T-cell (primary cell): ENCODE measurements at regions of chr2 and their contacts with region 1.

Region 1: GRCh38 chr2:157302492-157303099 is 23.0 kb downstream of the ERMN start:
- DNase-seq: peak in 23 of 35 experiments; percentile 1 to 74 (median 11)
- ATAC-seq: peak; percentile 68 to 80 (median 74)
- H3K4me3 ChIP-seq: no peak overlapping the region
- H3K4me3 Mint-ChIP-seq: no peak overlapping the region
- H3K27ac ChIP-seq: no peak overlapping the region
- H3K27ac Mint-ChIP-seq: no peak overlapping the region
- H3K4me1 ChIP-seq: peaks cover 0 to 7% of the 10 kb centered on the region in 2 experiments
- H3K4me1 Mint-ChIP-seq: peaks cover 11 to 18% (median 14%) of the 10 kb centered on the region in 3 donors
- H3K27me3 ChIP-seq: peaks cover 0 to 3% of the 10 kb centered on the region in 2 experiments
- H3K27me3 Mint-ChIP-seq: peaks cover 0 to 3% of the 10 kb centered on the region in 2 donors

Region 2: DNA sequence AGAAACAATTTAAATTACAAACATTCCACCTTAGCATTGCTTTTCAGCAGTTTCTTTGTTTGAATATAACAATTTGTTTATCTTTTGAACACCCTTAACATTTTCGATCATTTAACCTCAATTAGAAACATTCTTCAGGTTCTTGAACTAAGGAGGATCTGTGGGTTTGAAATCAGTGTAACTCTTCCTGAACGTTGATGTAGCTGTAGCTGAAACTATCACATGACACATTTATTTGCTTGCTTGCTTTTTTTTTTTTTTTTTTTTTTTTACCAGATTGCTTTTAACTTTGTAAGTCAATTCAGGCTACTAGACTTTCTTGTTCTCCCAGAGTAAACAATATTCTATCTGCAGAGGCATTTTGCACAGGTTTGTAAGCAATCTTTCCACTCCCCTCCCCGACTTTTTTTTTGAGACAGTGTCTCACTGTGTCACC is 818.8 kb before region 1 on chr2:
- CTCF ChIA-PET with region 1: interaction called in 1 of 2 experiments, 3 read pairs
- POLR2A ChIA-PET with region 1: interaction called in 1 of 2 experiments, 13 read pairs
- DNase-seq: no peak
- ATAC-seq: no peak
- H3K4me3 ChIP-seq: no peak overlapping the region
- H3K4me3 Mint-ChIP-seq: no peak overlapping the region
- H3K27ac ChIP-seq: no peak overlapping the region
- H3K27ac Mint-ChIP-seq: no peak overlapping the region
- H3K4me1 ChIP-seq: no peaks in the 10 kb centered on the region
- H3K4me1 Mint-ChIP-seq: peaks cover 7 to 36% (median 26%) of the 10 kb centered on the region in 3 donors
- H3K27me3 ChIP-seq: no peaks in the 10 kb centered on the region
- H3K27me3 Mint-ChIP-seq: no peaks in the 10 kb centered on the region

Region 3: DNA sequence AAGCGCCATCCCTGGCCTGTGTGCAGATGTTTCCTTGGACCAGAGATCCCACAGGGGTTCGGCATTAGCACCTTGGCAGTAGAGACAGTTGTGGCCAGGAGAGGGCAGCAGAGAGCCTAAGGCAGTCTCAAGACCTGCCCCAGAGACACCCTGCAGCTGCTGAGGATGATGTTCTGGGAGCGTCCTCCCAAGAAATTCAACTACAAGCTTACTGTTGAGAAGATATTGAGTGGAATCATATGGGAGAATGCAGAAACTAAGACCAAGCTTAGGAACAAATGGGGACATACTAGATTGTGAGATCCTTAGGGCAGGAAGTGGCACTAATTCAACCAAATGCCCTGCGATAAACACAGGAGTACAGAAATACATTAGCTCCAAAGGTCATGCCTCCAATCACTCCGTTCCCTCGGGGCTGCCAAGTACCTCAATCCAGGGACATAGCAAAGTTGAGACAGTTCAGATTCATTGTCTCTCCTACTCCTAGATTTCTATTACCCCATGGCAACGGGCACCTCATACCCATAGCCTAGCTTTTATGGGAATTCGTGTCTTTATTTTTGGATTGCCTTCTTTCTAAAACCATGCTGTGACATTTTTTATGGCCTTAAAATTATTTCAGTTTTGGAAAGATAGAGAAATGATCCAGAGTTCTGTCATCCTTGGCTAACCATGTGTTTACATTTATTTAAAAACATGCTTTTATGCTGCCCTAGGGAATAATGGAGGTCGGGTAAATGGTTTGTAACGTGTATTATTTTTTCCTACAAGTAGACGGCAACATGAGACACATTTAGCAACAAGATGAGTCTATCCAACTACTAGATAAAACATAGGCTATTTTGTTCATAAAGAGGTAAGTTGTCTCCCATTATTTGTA is 25.3 kb after region 1 on chr2:
- CTCF ChIA-PET with region 1: interaction called, 7 to 27 read pairs
- POLR2A ChIA-PET with region 1: no interaction called
- DNase-seq: peak; percentile 61 to 94 (median 81)
- ATAC-seq: peak; percentile 86 to 92 (median 91)
- H3K4me3 ChIP-seq: no peak overlapping the region
- H3K4me3 Mint-ChIP-seq: peak overlapping the region; percentile 40 to 55 (median 55)
- H3K27ac ChIP-seq: peak overlapping the region; percentile 44
- H3K27ac Mint-ChIP-seq: peak overlapping the region; percentile 87 to 91
- H3K4me1 ChIP-seq: peaks cover 33 to 39% of the 10 kb centered on the region in 2 experiments
- H3K4me1 Mint-ChIP-seq: peaks cover 54 to 56% (median 54%) of the 10 kb centered on the region in 3 donors
- H3K27me3 ChIP-seq: no peaks in the 10 kb centered on the region
- H3K27me3 Mint-ChIP-seq: no peaks in the 10 kb centered on the region

Region 4: DNA sequence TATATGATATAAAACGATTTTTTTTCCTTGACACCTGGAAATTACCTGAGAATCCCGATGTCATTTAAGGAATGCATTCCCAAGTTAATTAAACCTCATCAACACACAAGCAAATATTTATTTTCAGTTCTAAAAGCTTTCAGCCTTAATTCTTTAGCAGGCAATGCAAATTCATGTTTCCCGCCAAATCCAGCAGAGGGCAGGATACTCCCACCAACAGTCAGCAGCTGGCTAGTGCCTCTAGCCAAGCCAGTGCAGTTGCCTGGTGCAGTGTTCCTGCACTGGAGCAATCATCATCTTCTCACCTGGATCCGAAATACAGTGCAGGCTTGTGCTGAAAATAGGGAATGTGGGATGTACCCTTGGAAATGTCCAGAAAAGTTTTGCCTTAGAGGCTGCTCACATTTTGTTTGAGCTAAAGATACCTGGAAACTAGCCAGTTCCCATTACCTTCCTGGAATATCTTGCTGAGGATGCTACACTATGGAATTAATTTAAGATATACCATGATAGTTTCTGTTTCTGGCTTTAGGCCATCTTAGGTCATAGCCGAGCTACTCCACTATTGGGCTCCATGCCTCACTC is 189.7 kb after region 1 on chr2:
- CTCF ChIA-PET with region 1: interaction called, 9 to 16 read pairs
- POLR2A ChIA-PET with region 1: interaction called in 1 of 2 experiments, 3 read pairs
- DNase-seq: peak; percentile 45 to 83 (median 64)
- ATAC-seq: peak; percentile 86 to 91 (median 88)
- H3K4me3 ChIP-seq: no peak overlapping the region
- H3K4me3 Mint-ChIP-seq: no peak overlapping the region
- H3K27ac ChIP-seq: no peak overlapping the region
- H3K27ac Mint-ChIP-seq: peak overlapping the region in 1 of 2 donors; percentile 40
- H3K4me1 ChIP-seq: peaks cover 0 to 6% of the 10 kb centered on the region in 2 experiments
- H3K4me1 Mint-ChIP-seq: peaks cover 46 to 54% (median 49%) of the 10 kb centered on the region in 3 donors
- H3K27me3 ChIP-seq: no peaks in the 10 kb centered on the region
- H3K27me3 Mint-ChIP-seq: no peaks in the 10 kb centered on the region

Region 5: GRCh38 chr2:157628477-157629415 is 326.1 kb after region 1 on chr2 and contains the start of gene ACVR1C:
- CTCF ChIA-PET with region 1: interaction called, 4 to 17 read pairs
- POLR2A ChIA-PET with region 1: interaction called, 5 to 8 read pairs
- DNase-seq: peak; percentile 35 to 81 (median 59)
- ATAC-seq: peak; percentile 81 to 87 (median 87)
- H3K4me3 ChIP-seq: peak within 1 kb of the TSS; percentile 76 to 84
- H3K4me3 Mint-ChIP-seq: peak within 1 kb of the TSS; percentile 93 to 98 (median 94)
- H3K27ac ChIP-seq: peak within 1 kb of the TSS; percentile 50
- H3K27ac Mint-ChIP-seq: peak within 1 kb of the TSS; percentile 88 to 93
- H3K4me1 ChIP-seq: peaks cover 5 to 18% of the 10 kb centered on the region in 2 experiments
- H3K4me1 Mint-ChIP-seq: peaks cover 39 to 41% (median 40%) of the 10 kb centered on the region in 3 donors
- H3K27me3 ChIP-seq: peaks cover 0 to 10% of the 10 kb centered on the region in 2 experiments
- H3K27me3 Mint-ChIP-seq: no peaks in the 10 kb centered on the region
- total RNA-seq, gene ACVR1C: 3.6 to 5.7 (median 5.2) TPM

Region 6: DNA sequence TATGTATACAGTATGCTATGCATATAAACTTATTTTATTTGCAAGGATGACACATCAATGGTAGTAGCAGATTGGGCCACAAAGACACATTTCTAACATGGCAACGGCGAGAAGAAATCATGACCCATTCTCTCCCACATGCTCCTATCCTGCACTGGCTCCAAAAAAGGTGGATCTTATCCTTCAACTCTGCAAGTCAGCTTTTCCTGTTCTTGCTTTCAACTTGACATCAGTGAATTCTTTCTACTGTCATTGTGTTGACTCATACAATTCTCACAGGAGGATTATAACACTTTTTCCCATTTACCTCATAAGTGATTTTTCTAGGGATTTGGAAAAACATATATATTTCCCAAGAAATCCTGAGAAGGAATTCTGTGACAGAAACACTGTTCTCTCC is 520.4 kb after region 1 on chr2:
- CTCF ChIA-PET with region 1: interaction called in 1 of 2 experiments, 17 read pairs
- POLR2A ChIA-PET with region 1: no interaction called
- DNase-seq: no peak
- ATAC-seq: no peak
- H3K4me3 ChIP-seq: no peak overlapping the region
- H3K4me3 Mint-ChIP-seq: no peak overlapping the region
- H3K27ac ChIP-seq: no peak overlapping the region
- H3K27ac Mint-ChIP-seq: no peak overlapping the region
- H3K4me1 ChIP-seq: no peaks in the 10 kb centered on the region
- H3K4me1 Mint-ChIP-seq: peaks cover 6 to 18% (median 13%) of the 10 kb centered on the region in 3 donors
- H3K27me3 ChIP-seq: no peaks in the 10 kb centered on the region
- H3K27me3 Mint-ChIP-seq: no peaks in the 10 kb centered on the region